HAP-1 (cell line): ENCODE measurements at regions of chr3 and their contacts with region 1.

Region 1: GRCh38 chr3:130759699-130760338 is 13.2 kb upstream of the PIK3R4 start:
- DNase-seq: peak; percentile 63 to 64
- H3K4me3 ChIP-seq: no peak overlapping the region
- H3K4me1 ChIP-seq: no peaks in the 10 kb centered on the region
- H3K27me3 ChIP-seq: no peaks in the 10 kb centered on the region

Region 2: DNA sequence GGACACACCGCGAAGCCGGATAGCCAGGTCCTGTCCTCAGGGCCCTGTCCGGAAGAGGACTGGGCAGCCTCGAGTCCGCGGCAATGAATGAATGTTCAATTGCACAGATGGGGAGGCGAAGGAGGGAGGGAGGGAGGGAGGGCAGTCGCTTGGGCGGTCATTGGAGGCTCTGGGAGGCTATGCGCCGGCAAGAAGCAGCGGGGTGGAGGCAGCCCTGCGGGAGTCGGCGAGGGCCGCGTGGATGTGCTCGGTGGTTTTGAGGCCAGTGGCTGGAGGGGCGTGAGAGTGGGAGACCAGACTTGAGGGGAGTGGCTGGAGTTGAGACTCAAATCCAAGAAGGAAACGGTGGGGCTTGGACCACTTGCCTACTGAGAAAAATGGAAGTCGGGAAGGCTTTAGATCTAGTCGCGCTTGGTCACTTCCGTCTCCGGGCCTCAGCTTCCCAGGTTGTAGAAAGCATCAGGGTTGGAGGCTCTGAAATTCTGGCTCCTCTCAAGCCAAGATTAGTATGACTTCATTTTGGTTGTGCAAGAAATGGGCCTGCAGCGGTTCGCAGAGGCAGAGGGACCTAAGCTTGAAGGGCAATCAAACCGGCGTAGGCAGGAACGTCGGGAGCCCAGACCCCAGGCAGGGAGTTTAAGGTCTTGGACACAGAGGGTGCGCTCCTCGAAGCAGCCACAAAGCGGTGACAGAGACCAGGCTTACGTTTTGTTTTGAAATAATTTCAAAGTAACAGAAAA is 1132.2 kb before region 1 on chr3:
- in situ Hi-C with region 1: no loop called
- DNase-seq: peak; percentile 83 to 86
- H3K4me3 ChIP-seq: peak overlapping the region; percentile 43
- H3K4me1 ChIP-seq: peaks cover 24% of the 10 kb centered on the region
- H3K27me3 ChIP-seq: no peaks in the 10 kb centered on the region

Region 3: GRCh38 chr3:130892759-130893375 is 133.0 kb after region 1 on chr3:
- in situ Hi-C with region 1: loop called (anchors 25 kb)
- DNase-seq: peak; percentile 70 to 74
- H3K4me3 ChIP-seq: peak overlapping the region; percentile 78
- H3K4me1 ChIP-seq: peaks cover 6% of the 10 kb centered on the region
- H3K27me3 ChIP-seq: no peaks in the 10 kb centered on the region